A549 (cell line): ENCODE measurements at regions of chr13 and their contacts with region 1.

Region 1: GRCh38 chr13:44484562-44485138 is 91.5 kb downstream of the TSC22D1 start:
- DNase-seq: no peak
- ATAC-seq: no peak
- H3K4me3 ChIP-seq: no peak overlapping the region
- H3K27ac ChIP-seq: peak overlapping the region in 1 of 2 experiments; percentile 28; a peak in 1 of 6 replicates
- H3K4me1 ChIP-seq: peaks cover 8% of the 10 kb centered on the region; the same call in 2 of the 3 replicates
- CTCF ChIP-seq: no peak
- EP300 ChIP-seq: no peak
- POLR2A ChIP-seq: no peak
- RAD21 ChIP-seq: no peak

Region 2: DNA sequence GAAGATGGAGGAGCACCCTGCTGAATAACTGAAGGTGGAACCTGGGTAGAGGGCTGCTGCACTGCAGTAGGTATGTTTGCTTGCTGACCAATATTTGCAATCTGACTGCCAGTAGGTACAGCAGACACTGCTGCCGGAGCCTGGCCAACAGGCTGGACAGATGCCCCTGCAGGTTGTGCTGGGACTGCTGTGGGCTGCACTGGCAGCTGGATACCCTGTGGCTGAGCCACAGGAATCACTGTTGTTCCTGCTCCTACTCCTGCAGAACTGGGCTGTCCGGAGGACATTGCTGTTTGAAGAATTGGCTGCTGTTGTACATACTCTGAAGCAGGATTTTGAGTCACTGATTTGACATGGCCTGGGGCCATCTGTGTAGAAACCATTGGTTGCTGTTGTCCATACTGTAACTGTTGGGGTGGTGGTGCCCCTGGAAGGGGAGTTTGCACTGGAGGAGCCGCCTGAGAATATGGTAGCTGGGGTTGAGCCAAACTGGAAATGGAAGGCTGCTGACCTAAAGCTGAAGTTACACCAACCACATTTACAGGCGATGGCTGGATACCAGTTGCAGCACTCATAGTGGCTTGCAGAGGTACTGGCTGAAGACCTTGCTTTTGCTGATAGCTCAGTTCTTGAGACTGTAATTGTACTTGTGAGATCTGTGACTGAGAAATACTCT is 89.3 kb after region 1 on chr13:
- CTCF ChIA-PET with region 1: interaction called, 11 read pairs
- POLR2A ChIA-PET with region 1: interaction called, 3 read pairs
- DNase-seq: peak; percentile 21 to 55
- ATAC-seq: peak in 1 of 2 experiments; percentile 51; a peak in 3 of 6 replicates
- H3K4me3 ChIP-seq: no peak overlapping the region
- H3K27ac ChIP-seq: peak overlapping the region in 1 of 2 experiments; percentile 44; a peak in 2 of 6 replicates
- H3K4me1 ChIP-seq: peaks cover 51% of the 10 kb centered on the region
- CTCF ChIP-seq: no peak
- EP300 ChIP-seq: no peak
- POLR2A ChIP-seq: no peak
- RAD21 ChIP-seq: no peak

Region 3: DNA sequence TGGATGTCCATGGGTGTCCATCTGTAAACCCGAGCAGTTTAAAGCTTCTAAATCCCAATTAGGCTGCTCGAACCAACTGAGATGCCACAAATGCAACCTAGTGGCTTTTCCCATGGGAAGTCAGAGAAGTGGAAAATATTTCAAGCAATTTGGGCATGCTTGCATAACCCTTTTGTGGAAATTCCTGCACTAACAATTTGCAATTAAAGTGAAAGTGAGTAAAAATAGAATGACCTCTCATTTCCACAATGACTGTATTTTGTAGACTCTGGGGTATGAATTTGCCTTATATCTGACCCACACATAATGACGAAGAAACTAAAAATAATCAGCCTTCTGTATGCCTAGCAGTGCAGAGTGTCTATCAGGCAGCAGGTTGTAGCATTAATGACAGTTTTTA is 183.3 kb after region 1 on chr13:
- CTCF ChIA-PET with region 1: no interaction called
- POLR2A ChIA-PET with region 1: no interaction called
- DNase-seq: no peak
- ATAC-seq: no peak
- H3K4me3 ChIP-seq: no peak overlapping the region
- H3K27ac ChIP-seq: no peak overlapping the region
- H3K4me1 ChIP-seq: no peaks in the 10 kb centered on the region; the same call in 2 of the 3 replicates
- CTCF ChIP-seq: no peak
- EP300 ChIP-seq: no peak
- POLR2A ChIP-seq: no peak
- RAD21 ChIP-seq: no peak

Region 4: DNA sequence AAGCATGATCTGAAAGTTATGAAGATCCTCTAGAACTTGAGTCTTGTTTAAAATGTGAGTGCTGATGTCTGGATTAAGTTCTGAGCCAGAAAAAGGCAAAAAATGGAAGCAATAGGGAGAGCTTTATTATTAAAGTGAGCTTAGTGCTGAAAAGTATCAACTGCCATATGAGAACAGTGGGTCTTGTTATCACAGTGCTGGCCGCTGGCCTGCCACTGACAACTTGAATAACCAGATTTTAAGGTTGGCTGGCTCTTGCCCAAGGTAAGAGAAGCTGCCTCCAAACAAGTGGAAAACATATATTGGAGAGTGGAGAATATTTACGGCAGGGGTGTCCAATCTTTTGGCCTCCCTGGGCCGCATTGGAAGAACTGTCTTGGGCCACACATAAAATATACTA is 470.8 kb after region 1 on chr13:
- CTCF ChIA-PET with region 1: interaction called, 11 read pairs
- POLR2A ChIA-PET with region 1: no interaction called
- DNase-seq: no peak
- ATAC-seq: no peak
- H3K4me3 ChIP-seq: no peak overlapping the region
- H3K27ac ChIP-seq: no peak overlapping the region
- H3K4me1 ChIP-seq: peaks cover 15% of the 10 kb centered on the region
- CTCF ChIP-seq: no peak
- EP300 ChIP-seq: no peak
- POLR2A ChIP-seq: no peak
- RAD21 ChIP-seq: no peak

Region 5: DNA sequence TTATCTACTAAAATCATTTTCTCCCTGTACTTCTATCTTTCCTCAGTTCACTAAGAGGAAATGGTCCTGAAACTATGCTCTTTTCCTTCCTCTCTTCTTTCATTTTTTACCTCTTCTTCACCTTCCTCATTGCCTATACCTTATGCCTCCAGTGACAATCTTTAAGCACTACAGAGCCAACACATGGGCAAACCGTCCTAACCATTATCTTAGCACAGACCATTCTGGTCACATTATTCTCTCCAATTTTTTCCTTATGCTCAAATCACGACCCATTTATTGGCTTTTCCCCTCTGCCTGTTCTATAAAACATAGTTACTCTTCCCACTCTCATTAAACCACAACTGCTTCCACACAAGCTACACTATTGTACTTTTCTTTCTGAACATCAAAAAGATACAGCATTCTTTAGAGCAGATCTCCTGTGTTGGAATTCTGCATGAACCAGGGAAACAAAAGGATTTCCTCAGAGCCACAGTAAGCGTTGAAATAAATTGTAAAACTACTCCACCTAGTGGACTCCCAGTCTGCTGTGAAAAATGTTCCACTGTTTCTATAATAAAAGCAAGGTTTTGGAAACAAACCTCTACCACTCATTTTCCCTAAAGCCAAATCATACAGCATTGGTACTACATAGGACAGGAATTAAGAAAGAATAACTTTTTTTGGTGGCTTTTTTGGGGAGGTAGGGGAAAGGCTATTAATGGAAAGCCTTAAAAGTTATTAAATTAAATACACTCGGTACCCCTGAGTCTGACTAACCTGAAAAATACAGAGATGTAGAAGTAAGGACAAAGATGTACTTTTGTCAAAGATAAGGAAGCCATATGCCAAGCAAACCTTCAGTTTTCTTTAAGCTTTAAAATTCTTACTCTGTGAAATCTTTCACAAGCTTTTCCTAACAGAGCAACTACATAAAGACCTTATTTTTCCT is 485.2 kb after region 1 on chr13:
- CTCF ChIA-PET with region 1: interaction called, 11 read pairs
- POLR2A ChIA-PET with region 1: no interaction called
- DNase-seq: peak; percentile 13 to 35
- ATAC-seq: peak; percentile 74 to 75; a peak in 4 of 6 replicates
- H3K4me3 ChIP-seq: no peak overlapping the region
- H3K27ac ChIP-seq: peak overlapping the region; percentile 49 to 56; a peak in 3 of 6 replicates
- H3K4me1 ChIP-seq: peaks cover 26% of the 10 kb centered on the region
- CTCF ChIP-seq: peak; percentile 69
- EP300 ChIP-seq: no peak
- POLR2A ChIP-seq: no peak
- RAD21 ChIP-seq: peak; percentile 78 to 86